Head of caudate nucleus (tissue), 42 donors: ENCODE measurements at regions of chr17 and their contacts with region 1.

Region 1: DNA sequence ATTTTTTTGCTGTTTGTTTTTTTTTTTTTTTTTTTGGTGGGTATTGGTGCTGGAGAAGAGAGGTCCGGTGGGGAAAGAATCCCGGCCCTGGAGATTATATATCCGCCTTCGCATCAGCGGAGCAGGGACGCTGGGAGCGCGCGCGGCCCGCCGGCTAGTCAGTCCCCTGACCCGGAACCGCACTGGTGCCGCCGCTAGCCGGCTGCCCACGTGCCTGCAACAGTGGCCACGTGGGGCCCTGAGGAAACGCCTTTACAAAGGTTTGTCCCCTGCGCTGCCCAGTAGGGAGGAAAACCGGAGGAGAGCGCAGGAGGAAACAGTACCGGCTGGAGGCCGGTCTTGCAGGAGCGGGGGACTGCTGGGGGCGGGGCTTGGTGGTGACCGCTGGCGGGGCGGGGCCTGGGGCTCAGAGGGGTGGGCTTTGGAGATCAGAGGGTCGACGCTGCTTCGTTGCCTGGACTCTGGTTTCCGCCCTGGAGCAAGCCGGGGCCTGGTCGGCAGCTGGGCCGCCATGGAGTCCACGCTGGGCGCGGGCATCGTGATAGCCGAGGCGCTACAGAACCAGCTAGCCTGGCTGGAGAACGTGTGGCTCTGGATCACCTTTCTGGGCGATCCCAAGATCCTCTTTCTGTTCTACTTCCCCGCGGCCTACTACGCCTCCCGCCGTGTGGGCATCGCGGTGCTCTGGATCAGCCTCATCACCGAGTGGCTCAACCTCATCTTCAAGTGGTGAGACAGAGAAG is at the start of gene G6PC3:
- DNase-seq: peak; percentile 90 to 98 (median 95)

Region 2: DNA sequence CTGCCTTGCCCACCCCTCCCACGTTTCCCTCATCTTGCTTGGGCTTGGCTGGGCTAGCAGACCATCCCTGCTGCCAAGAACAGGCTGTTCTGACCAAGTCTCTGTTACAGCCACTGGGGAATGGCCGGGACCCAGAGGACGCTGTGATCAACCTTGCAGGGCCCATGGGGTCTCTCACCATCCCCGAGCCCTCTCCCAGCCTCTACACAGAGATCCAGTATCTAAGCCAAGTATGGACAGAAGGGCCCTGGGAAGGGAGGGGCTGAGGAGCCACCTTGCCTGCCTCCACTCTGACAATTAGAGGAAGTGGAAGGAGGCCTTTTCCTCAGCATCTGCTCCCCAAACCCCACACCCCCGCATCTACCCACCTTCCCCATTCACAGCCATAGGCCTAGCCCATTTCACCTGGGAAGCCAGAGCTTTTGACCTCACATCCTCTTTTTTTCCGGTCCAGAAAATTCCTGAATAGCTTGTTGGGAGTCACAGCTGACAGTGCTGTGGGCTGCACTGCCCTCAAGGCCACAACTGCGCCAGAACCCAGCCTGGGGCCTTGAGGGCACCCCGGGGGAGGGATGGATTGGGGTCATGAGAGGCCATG is 209.5 kb before region 1 on chr17:
- intact Hi-C with region 1: no loop called
- DNase-seq: peak in 18 of 42 donors; percentile 9 to 57 (median 29)

Region 3: GRCh38 chr17:43927060-43927864 is 143.4 kb before region 1 on chr17:
- intact Hi-C with region 1: no loop called
- DNase-seq: peak in 6 of 42 donors; percentile 3 to 50 (median 20)

Region 4: DNA sequence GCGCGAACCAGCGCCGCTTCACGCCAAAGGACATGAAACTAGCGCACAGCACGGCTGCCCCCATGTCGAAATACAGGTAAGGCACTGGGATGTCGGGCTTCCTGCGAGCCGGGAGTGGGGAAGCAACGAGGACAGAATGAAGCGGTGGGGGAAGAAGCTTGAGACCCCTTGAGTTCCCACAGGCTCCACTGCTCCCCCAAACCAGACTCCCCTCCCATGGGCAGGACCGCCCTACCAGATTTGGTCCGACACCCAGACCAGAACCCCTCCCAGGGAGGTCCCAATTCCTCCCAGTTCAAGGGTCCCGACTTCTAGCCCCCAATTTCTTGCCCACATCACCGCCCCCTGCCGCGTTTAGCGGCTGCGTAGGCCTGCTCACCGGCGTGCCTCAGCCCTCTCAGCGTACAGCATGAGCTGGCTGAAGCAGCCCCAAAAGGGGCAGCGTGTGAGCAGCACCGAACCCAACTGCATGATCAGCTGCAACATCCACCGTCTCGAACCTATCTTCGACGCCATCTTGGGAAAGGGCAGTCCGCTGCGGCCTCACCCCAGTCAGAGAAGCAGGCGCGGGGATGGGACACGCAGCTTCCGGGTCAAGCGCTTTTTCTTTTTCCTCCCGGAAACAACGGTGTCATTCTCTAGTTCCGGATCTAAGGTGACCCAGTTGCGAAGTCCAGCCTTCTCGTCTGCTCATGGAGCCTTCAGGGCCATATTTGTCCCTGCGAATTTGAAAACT is 56.0 kb before region 1 on chr17 and contains the start of gene TMEM101:
- intact Hi-C with region 1: loop called (anchors 2 kb)
- DNase-seq: peak; percentile 86 to 97 (median 93)

Region 5: DNA sequence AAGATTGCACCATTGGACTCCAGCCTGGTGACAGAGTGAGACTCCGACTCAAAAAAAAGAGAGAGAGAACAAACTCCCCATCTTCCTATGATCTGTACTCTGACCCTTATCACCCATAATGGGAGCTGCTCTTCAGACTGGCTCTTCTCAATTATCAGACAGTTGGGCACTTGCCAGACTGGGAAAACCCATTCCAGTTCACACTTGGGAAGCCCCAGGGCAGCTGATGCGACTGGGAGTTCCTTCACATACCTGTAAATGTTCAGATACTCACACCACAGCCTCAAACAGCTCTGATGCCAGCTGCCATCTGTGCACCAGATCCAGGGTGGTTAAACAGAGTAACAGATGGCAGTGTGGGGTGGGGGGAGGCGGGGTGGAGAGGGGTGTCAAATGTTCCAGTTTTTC is 32.0 kb before region 1 on chr17:
- intact Hi-C with region 1: no loop called
- DNase-seq: no peak

Region 6: GRCh38 chr17:44110823-44111633 is 40.4 kb after region 1 on chr17:
- intact Hi-C with region 1: loop called (anchors 5 kb)
- DNase-seq: peak; percentile 97 to 100 (median 98)